ENCODE measurements at regions of chr12 and their contacts with region 1.

Region 1: DNA sequence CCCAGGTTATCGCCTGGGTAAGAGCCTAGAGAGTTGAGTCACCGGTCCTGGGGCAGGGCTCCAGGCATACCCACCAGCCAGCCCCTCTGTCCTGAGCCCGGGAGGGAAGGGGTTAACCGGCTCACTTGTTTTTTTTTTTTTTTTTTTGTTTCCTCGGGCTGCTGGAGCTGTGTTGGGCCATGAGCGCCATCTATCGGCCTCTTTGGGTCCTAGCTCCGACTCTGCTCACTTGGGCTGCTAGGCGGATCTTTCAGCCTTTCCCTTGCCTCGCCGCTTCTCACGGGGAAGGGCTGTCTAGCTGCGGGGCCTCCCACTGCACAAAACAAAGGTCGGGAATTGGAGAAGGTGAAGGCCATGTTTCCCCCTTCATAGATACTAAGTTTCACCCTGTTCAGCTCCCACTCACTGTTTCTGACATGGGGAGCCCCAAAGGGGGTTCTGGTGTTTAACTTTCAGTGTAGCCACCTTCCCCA is 2.8 kb upstream of the SMUG1 start:
- DNase-seq: peak; percentile 58 to 86 (median 80)
- H3K4me3 ChIP-seq: peak overlapping the region in 1 of 59 donors; percentile 7
- H3K27ac ChIP-seq: no peak overlapping the region
- H3K27me3 ChIP-seq: peaks cover 0 to 62% (median 16%) of the 10 kb centered on the region in 45 donors
- CTCF ChIP-seq: peak; percentile 65 to 93 (median 84)

Region 2: DNA sequence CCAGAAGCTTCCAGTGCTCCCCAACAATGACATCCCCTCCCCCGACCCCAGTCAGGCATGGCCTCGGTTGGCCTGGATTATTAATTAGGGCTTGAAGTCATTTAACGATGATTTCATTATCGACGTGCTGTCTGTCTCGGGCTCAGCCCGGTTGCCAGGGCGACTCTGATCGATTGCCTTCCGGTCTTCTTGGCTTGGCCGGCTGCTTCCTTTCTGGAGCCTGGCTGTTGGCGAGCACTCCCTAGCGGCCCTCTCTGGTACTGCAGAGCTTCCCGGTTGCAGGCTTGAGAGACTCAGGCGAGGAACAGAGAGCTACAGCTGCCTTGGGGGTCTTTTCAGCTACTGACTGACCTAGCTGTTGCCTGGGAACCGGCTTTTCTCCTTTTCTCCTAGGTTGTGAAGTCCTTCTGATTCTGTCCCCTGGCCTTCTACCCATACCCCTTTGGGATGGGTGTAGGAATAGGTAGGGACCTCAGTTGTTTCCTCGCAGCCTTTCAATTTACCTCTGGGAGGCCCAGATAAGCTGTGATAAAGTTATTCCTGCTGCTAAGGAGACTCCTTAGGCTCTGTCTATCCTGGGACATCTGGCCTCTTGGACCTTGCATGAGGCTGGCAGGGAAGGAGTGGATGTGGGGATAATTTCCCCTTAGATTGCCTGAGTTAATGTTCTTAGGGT is 434.4 kb before region 1 on chr12:
- intact Hi-C with region 1: loop called (anchors 10 kb)
- DNase-seq: peak; percentile 70 to 85 (median 82)
- H3K4me3 ChIP-seq: peak overlapping the region in 35 of 59 donors; percentile 0 to 51 (median 30)
- H3K27ac ChIP-seq: no peak overlapping the region
- H3K27me3 ChIP-seq: peaks cover 0 to 46% (median 11%) of the 10 kb centered on the region in 45 donors
- CTCF ChIP-seq: peak; percentile 49 to 95 (median 87)